ENCODE measurements at regions of chr2 and their contacts with region 1.

Region 1: GRCh38 chr2:99417396-99417795 is 72.4 kb downstream of the REV1 start:
- DNase-seq: no peak
- H3K4me3 Mint-ChIP-seq: no peak overlapping the region
- H3K27ac Mint-ChIP-seq: no peak overlapping the region
- H3K4me1 Mint-ChIP-seq: peaks cover 3% of the 10 kb centered on the region
- H3K27me3 Mint-ChIP-seq: no peaks in the 10 kb centered on the region

Region 2: GRCh38 chr2:99377879-99378278 is 39.5 kb before region 1 on chr2:
- intact Hi-C with region 1: loop called (anchors 5 kb)
- DNase-seq: no peak
- H3K4me3 Mint-ChIP-seq: no peak overlapping the region
- H3K27ac Mint-ChIP-seq: peak overlapping the region; percentile 47
- H3K4me1 Mint-ChIP-seq: peaks cover 23% of the 10 kb centered on the region
- H3K27me3 Mint-ChIP-seq: no peaks in the 10 kb centered on the region

Region 3: GRCh38 chr2:99507937-99508818 is 90.8 kb after region 1 on chr2:
- intact Hi-C with region 1: no loop called
- DNase-seq: no peak
- H3K4me3 Mint-ChIP-seq: no peak overlapping the region
- H3K27ac Mint-ChIP-seq: no peak overlapping the region
- H3K4me1 Mint-ChIP-seq: peaks cover 6% of the 10 kb centered on the region
- H3K27me3 Mint-ChIP-seq: peaks cover 1% of the 10 kb centered on the region

Measured in activated CD4-positive, alpha-beta T cell treated with anti-CD3 and anti-CD28 coated beads, Interleukin-2, amount 10 ng/mL, durations not matched to agents 24 days and 14 days (primary cell).